Activated CD4-positive, alpha-beta T cell treated with anti-CD3 and anti-CD28 coated beads, Interleukin-2, amount 10 ng/mL, durations not matched to agents 24 days and 14 days (primary cell): ENCODE measurements at regions of chr4 and their contacts with region 1.

Region 1: GRCh38 chr4:26330186-26330787 is 9.5 kb downstream of the RBPJ start:
- DNase-seq: peak; percentile 78
- H3K4me3 Mint-ChIP-seq: peak overlapping the region; percentile 23
- H3K27ac Mint-ChIP-seq: peak overlapping the region; percentile 61
- H3K4me1 Mint-ChIP-seq: peaks cover 49% of the 10 kb centered on the region
- H3K27me3 Mint-ChIP-seq: no peaks in the 10 kb centered on the region

Region 2: GRCh38 chr4:26346203-26346620 is 15.9 kb after region 1 on chr4:
- intact Hi-C with region 1: loop called (anchors 2 kb)
- DNase-seq: no peak
- H3K4me3 Mint-ChIP-seq: no peak overlapping the region
- H3K27ac Mint-ChIP-seq: no peak overlapping the region
- H3K4me1 Mint-ChIP-seq: peaks cover 58% of the 10 kb centered on the region
- H3K27me3 Mint-ChIP-seq: no peaks in the 10 kb centered on the region

Region 3: GRCh38 chr4:26372525-26373172 is 42.4 kb after region 1 on chr4:
- intact Hi-C with region 1: loop called (anchors 5 kb)
- DNase-seq: peak; percentile 87
- H3K4me3 Mint-ChIP-seq: peak overlapping the region; percentile 17
- H3K27ac Mint-ChIP-seq: peak overlapping the region; percentile 63
- H3K4me1 Mint-ChIP-seq: peaks cover 62% of the 10 kb centered on the region
- H3K27me3 Mint-ChIP-seq: no peaks in the 10 kb centered on the region